ENCODE measurements at regions of chr15 and their contacts with region 1.

Region 1: GRCh38 chr15:34209421-34210282 is at the start of gene KATNBL1:
- DNase-seq: peak; percentile 96 to 100
- ATAC-seq: peak; percentile 94
- total RNA-seq, gene KATNBL1: 33.7 to 41.4 TPM

Region 2: GRCh38 chr15:34065941-34066340 is 143.7 kb before region 1 on chr15:
- intact Hi-C with region 1: loop called (anchors 5 to 10 kb)
- DNase-seq: no peak
- ATAC-seq: no peak